Mammary epithelial cell (primary cell): ENCODE measurements at regions of chr10 and their contacts with region 1.

Region 1: GRCh38 chr10:2214035-2214434 is 476.7 kb upstream of the ADARB2 start:
- DNase-seq: peak; percentile 89
- H3K4me3 ChIP-seq: no peak overlapping the region
- H3K27ac ChIP-seq: peak overlapping the region; percentile 62
- H3K4me1 ChIP-seq: peaks cover 6% of the 10 kb centered on the region
- H3K27me3 ChIP-seq: no peaks in the 10 kb centered on the region
- CTCF ChIP-seq: no peak

Region 2: GRCh38 chr10:2079603-2080078 is 134.4 kb before region 1 on chr10:
- CTCF ChIA-PET with region 1: no interaction called
- dilution Hi-C with region 1: no loop called
- in situ Hi-C with region 1: no loop called
- intact Hi-C with region 1: no loop called
- DNase-seq: no peak
- H3K4me3 ChIP-seq: no peak overlapping the region
- H3K27ac ChIP-seq: no peak overlapping the region
- H3K4me1 ChIP-seq: no peaks in the 10 kb centered on the region
- H3K27me3 ChIP-seq: no peaks in the 10 kb centered on the region
- CTCF ChIP-seq: no peak

Region 3: DNA sequence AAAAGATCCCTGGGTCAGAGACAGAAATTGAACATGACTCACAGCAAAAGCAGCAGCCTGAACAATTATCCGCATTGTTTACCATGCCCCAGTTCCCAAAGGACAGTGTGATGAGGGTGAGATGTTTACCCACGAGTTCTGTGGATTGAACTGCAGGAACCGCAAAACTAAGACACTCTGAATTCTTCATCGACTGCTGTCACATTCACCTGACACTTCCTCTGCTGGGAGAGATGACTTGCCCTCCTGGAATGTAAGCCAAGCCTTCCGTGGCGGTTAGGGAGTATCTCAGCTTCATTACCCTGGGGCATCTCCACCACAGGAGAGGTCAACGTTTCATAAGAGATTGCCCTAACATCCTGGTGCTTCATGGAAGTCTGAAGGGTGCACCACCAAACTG is 102.1 kb before region 1 on chr10:
- CTCF ChIA-PET with region 1: no interaction called
- dilution Hi-C with region 1: no loop called
- in situ Hi-C with region 1: no loop called
- intact Hi-C with region 1: loop called (anchors 10 kb)
- DNase-seq: peak; percentile 99
- H3K4me3 ChIP-seq: no peak overlapping the region
- H3K27ac ChIP-seq: peak overlapping the region; percentile 76
- H3K4me1 ChIP-seq: peaks cover 12% of the 10 kb centered on the region
- H3K27me3 ChIP-seq: no peaks in the 10 kb centered on the region
- CTCF ChIP-seq: no peak

Region 4: GRCh38 chr10:2456834-2457233 is 242.8 kb after region 1 on chr10:
- CTCF ChIA-PET with region 1: no interaction called
- dilution Hi-C with region 1: no loop called
- in situ Hi-C with region 1: no loop called
- intact Hi-C with region 1: no loop called
- DNase-seq: no peak
- H3K4me3 ChIP-seq: no peak overlapping the region
- H3K27ac ChIP-seq: no peak overlapping the region
- H3K4me1 ChIP-seq: no peaks in the 10 kb centered on the region
- H3K27me3 ChIP-seq: no peaks in the 10 kb centered on the region
- CTCF ChIP-seq: no peak